Adrenal gland (tissue), 19 donors: ENCODE measurements at regions of chr22 and their contacts with region 1.

Region 1: DNA sequence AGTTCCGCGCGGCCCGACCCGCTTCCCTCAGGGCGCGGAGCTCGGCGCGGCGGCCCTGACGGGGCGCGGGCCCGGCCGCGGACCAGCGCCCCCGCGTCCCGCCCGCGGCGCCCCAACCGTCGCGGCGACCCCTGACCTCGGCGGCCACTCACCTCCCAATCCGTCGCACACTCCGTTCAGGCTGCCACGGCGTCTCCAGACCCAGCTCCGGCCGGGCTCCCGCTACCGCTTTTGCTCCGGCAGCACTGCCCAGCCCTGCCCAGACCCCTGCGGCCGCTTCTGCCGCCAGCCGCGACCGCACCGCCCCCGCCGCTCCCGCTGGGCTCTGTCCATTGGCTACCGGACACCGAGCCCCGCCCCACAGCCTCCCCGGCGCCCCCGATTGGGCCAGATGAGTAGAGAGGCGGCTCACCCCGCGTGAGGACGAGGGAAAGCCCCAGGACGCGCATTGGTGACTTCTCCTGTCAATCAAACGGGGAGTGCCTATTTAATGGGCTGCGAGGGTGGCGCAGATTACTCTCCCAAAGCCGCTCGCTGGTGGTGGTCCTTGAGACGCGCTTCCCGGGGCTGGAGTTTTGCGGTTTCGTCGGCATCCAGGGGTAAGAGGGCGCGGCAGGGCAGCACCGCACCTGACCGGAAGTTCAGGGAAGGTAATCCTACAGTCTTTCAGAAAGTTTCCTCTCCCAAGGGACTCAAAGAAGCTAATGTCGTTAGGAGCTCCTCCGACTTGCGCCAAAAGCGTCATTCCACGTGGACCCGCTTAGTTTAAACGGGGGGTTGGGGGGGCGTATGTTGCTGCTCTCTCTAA is at the start of gene PACSIN2:
- DNase-seq: peak; percentile 100
- H3K4me3 ChIP-seq: peak within 1 kb of the TSS in 3 of 4 donors; percentile 60 to 93 (median 74)
- H3K27ac ChIP-seq: peak within 1 kb of the TSS in 4 of 5 donors; percentile 34 to 94 (median 79)
- H3K4me1 ChIP-seq: peaks cover 24 to 37% of the 10 kb centered on the region in 2 donors
- H3K27me3 ChIP-seq: no peaks in the 10 kb centered on the region
- CTCF ChIP-seq: no peak
- POLR2A ChIP-seq: peak; percentile 87 to 98
- total RNA-seq, gene PACSIN2: 77.9 to 186 (median 123) TPM

Region 2: DNA sequence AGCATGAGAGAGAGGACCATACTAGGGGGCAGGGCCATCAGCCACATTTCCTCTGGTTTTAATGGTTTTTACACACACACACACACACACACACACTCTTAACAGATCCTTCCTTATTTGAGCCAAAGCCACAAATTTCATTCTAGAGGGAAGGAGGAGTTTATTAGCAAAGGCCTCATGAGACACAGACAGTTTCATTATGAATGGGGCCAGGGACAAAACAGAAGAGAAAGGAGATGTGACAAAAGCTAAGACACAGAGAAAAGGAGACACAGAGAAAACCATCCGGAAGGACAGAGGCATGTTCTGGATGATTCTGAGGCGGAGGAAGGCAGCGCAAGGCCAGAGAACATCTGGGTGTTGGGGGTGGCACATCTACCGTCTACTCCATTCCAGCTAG is 125.8 kb before region 1 on chr22:
- intact Hi-C with region 1: loop called in 1 of 2 experiments (anchors 10 kb)
- DNase-seq: no peak
- H3K4me3 ChIP-seq: no peak overlapping the region
- H3K27ac ChIP-seq: peak overlapping the region in 2 of 5 donors; percentile 58 to 67
- H3K4me1 ChIP-seq: peaks cover 0 to 4% of the 10 kb centered on the region in 2 donors
- H3K27me3 ChIP-seq: no peaks in the 10 kb centered on the region
- CTCF ChIP-seq: no peak
- POLR2A ChIP-seq: no peak